Aorta (tissue), 5 donors: ENCODE measurements at regions of chr21 and their contacts with region 1.

Region 1: GRCh38 chr21:32257962-32258785 is 20.7 kb downstream of the MIS18A start:
- DNase-seq: peak in 1 of 2 donors; percentile 72
- ATAC-seq: peak; percentile 90
- H3K4me3 ChIP-seq: no peak overlapping the region
- H3K27ac ChIP-seq: no peak overlapping the region
- H3K4me1 ChIP-seq: no peaks in the 10 kb centered on the region
- H3K27me3 ChIP-seq: no peaks in the 10 kb centered on the region

Region 2: GRCh38 chr21:31781737-31782136 is 476.4 kb before region 1 on chr21:
- intact Hi-C with region 1: loop called (anchors 5 to 10 kb)
- DNase-seq: peak in 1 of 2 donors; percentile 73
- ATAC-seq: peak; percentile 64
- H3K4me3 ChIP-seq: no peak overlapping the region
- H3K27ac ChIP-seq: no peak overlapping the region
- H3K4me1 ChIP-seq: no peaks in the 10 kb centered on the region
- H3K27me3 ChIP-seq: no peaks in the 10 kb centered on the region

Region 3: DNA sequence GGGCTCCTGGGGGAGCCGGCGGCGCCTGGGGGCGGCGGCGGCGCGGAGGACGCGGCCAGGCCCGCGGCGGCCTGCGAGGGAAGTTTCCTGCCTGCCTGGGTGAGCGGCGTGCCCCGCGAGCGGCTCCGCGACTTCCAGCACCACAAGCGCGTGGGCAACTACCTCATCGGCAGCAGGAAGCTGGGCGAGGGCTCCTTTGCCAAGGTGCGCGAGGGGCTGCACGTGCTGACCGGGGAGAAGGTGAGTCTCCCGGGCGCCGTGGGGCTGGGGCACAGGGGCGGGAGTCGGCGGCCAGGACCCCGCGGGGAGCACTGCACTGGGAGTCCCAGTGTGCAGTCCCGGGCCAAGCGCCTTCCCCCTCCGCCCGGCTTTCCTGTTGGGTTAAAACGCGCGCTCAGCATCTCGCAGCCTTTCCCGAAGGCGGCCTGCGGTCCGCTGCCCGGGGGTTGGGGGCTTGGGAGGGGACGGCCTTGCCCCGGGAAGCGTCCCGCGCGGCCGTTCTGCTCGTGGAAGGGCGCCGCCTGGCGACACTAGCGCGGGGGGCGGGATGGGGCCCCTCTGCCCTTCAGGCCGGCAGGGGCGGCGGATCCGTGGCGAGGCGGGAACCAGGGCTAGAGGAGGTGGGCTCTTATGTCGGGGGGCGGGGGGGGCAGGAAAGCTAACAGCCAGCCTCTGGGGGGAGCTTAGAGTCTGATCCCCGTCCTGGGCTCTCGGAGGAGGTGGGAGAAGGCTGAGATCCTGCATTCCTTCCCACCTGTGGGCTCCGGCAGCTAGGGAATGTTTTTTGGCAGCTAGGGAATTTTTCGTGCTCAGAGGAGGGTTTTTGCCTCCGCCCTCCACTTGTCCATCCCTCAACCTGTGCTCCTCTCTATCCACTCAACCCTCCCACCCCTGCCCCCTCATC is 384.2 kb before region 1 on chr21:
- intact Hi-C with region 1: loop called in 1 of 2 experiments (anchors 2 kb)
- DNase-seq: peak; percentile 58 to 85
- ATAC-seq: no peak
- H3K4me3 ChIP-seq: peak overlapping the region; percentile 44 to 62
- H3K27ac ChIP-seq: no peak overlapping the region
- H3K4me1 ChIP-seq: no peaks in the 10 kb centered on the region
- H3K27me3 ChIP-seq: no peaks in the 10 kb centered on the region

Region 4: DNA sequence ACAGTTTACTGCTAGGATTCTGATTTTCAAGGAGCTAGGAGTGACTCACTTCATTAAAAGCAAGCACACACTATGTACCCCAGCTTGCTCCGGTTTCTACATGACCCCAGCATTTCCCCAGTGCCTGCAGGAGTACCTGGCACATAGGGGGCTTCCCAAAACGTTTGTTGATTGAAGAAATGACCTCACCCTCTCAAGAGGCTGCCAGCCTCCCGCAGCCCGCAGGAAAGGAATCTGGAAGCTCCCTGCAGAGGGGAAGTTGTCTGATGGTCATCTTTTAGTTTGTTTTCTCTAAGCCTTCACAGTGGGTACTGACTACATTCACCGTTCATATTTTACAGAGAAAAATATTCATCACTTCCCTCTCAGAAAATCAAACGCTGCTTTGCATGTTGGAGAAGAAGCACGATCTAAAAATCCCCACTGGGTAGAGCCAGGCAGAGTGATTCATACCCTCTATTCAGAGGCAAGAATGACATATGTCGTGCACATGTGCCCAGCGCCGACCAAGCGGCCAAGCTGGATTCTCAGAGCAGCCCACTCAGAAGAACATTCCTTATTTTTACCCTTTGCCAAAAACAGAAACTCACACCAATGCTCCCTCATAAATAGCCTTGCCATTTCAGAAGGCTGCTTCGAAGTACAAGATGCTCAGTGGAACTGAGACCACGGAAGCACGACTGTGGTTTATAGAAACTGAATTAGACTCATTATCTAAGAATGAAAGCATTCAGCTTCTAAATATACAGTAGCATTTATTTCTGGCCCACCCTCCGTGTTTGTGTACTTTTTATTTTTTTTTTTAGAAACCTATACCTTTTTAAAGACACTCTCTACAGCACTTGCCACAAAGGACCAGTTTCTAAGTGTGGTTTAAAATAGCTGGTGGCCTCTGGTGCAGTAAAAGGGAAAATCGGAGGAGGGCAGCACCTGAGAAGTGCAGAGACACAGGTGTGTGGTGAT is 122.5 kb before region 1 on chr21:
- intact Hi-C with region 1: loop called (anchors 5 kb)
- DNase-seq: peak; percentile 68 to 77
- ATAC-seq: peak; percentile 69
- H3K4me3 ChIP-seq: no peak overlapping the region
- H3K27ac ChIP-seq: peak overlapping the region in 1 of 2 donors; percentile 30
- H3K4me1 ChIP-seq: no peaks in the 10 kb centered on the region
- H3K27me3 ChIP-seq: no peaks in the 10 kb centered on the region